ENCODE measurements at regions of chr2 and their contacts with region 1.

Region 1: DNA sequence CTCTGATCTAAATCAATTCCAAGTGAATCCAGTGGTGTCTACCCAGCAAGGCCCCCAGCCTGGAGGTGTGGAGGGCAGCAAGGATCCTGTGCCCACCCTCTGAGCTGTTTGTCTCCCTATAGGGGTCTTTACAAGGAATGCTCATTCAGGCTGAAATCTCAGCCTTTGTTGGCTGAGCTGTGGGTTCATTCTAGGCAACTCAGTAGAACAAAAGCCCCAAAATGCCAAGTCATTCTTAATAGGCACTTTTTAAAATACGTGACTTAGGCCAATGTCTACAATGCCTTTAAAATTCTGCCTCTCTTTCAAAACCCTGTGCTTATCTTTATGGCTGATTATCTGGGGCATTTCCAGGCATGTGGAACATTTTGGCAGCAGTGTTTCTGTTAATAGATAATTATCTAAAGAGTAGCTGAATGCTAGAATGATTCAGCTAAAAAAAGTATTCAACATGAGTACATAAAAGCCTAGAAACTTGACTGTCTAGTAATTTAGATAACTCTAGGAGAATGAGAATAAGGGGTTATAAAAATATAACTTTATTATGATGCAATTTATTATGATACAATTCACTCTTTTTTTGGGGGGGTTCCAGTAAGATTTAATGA is 7.4 kb downstream of the UGT1A6 start:
- DNase-seq: no peak
- ATAC-seq: peak; percentile 38
- H3K4me3 ChIP-seq: no peak overlapping the region
- H3K27ac ChIP-seq: no peak overlapping the region
- H3K4me1 ChIP-seq: no peaks in the 10 kb centered on the region
- H3K27me3 ChIP-seq: no peaks in the 10 kb centered on the region

Region 2: DNA sequence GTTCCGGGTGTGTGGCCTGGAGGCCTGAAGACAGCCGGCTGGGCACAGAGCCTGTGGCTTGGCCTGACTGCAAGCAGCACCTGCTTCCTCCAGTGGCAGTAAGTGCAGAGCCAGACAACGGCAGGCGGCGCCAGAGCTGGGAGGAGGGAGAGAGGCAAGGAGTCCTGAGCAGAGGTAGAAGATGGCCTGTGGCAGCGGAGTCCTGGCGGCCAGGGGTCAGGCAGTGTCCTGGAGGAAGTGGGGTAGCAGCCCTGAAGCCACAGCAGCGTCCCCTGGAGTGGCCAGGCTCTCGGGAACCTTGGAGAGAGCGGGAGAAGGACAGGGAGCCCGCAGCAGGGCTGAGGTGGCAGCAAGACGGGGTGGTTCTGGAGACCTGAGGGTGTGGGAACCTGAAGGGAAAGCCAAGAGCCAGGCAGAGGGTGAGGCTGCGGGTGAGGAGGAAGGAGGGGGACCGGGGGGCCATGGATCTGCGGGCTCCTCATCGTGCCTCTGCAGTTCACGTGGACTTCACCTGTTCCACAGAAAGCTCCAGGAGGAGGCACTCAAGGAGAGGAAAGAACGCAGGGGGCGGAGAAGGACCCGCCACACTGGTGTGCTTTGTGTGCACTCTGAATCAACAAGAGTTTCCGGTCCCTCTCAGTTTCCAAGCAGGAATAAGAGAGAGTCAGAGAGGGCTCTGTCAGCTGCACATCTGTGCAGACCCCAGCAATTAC is 219.5 kb before region 1 on chr2:
- intact Hi-C with region 1: loop called in 1 of 2 experiments (anchors 10 kb)
- DNase-seq: peak; percentile 68 to 79
- ATAC-seq: peak; percentile 26
- H3K4me3 ChIP-seq: no peak overlapping the region
- H3K27ac ChIP-seq: no peak overlapping the region
- H3K4me1 ChIP-seq: no peaks in the 10 kb centered on the region
- H3K27me3 ChIP-seq: no peaks in the 10 kb centered on the region

Region 3: GRCh38 chr2:233831011-233831721 is 131.0 kb after region 1 on chr2:
- intact Hi-C with region 1: no loop called
- DNase-seq: peak; percentile 42 to 53
- ATAC-seq: no peak
- H3K4me3 ChIP-seq: no peak overlapping the region
- H3K27ac ChIP-seq: no peak overlapping the region
- H3K4me1 ChIP-seq: no peaks in the 10 kb centered on the region
- H3K27me3 ChIP-seq: no peaks in the 10 kb centered on the region